ENCODE measurements at regions of chr5 and their contacts with region 1.

Region 1: DNA sequence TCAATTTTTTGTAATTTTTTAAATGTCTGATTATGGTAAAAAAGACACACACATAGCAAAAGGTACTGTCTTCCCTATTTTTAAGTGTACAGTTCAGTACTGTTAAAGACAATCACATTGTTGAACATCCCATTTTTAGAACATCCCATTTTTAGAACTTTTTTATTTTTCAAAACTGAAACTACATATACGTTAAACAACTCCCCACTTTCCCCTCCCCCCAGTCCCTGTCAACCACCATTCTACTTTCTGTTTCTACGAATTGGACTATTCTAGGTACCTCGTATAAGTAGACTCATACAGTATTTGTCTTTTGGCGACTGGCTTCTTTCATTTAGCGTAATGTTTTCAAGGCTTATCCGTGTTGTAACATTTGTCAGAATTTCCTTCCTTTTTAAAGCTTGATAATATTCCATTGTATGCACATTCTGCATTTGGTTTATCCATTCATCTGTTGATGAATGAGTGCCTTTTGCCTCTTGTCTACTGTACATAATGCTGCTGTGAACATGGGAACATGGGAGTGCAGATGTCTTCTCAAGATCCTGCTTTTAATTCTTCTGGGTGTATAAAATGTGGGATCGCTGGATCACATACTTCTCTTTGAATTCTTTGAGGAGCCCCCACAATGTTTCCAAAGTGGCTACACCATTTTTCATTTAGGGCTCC is 154.0 kb downstream of the PIK3R1 start:
- DNase-seq: peak; percentile 48
- H3K4me3 Mint-ChIP-seq: peak overlapping the region; percentile 46
- H3K27ac Mint-ChIP-seq: peak overlapping the region; percentile 79
- H3K4me1 Mint-ChIP-seq: peaks cover 61% of the 10 kb centered on the region
- H3K27me3 Mint-ChIP-seq: peaks cover 1% of the 10 kb centered on the region

Region 2: GRCh38 chr5:68303038-68303738 is 66.4 kb before region 1 on chr5:
- intact Hi-C with region 1: loop called (anchors 5 kb)
- DNase-seq: no peak
- H3K4me3 Mint-ChIP-seq: no peak overlapping the region
- H3K27ac Mint-ChIP-seq: peak overlapping the region; percentile 70
- H3K4me1 Mint-ChIP-seq: peaks cover 34% of the 10 kb centered on the region
- H3K27me3 Mint-ChIP-seq: peaks cover 12% of the 10 kb centered on the region

Region 3: GRCh38 chr5:68406767-68407241 is 37.2 kb after region 1 on chr5:
- intact Hi-C with region 1: loop called (anchors 5 kb)
- DNase-seq: no peak
- H3K4me3 Mint-ChIP-seq: peak overlapping the region; percentile 47
- H3K27ac Mint-ChIP-seq: peak overlapping the region; percentile 81
- H3K4me1 Mint-ChIP-seq: peaks cover 30% of the 10 kb centered on the region
- H3K27me3 Mint-ChIP-seq: peaks cover 2% of the 10 kb centered on the region

Measured in activated T-helper 1 cell treated with anti-CD3 and anti-CD28 coated beads, Interleukin-12 subunit alpha, Interleukin-12 subunit beta, Interleukin-2, Interleukin-4 antibody, amounts not matched to agents 30 ng/mL and 10 ng/mL and 1 ng/mL, durations not matched to agents 14 hours and 24 hours and 36 hours (primary cell).